CD4-positive, alpha-beta memory T cell (primary cell): ENCODE measurements at regions of chr4 and their contacts with region 1.

Region 1: DNA sequence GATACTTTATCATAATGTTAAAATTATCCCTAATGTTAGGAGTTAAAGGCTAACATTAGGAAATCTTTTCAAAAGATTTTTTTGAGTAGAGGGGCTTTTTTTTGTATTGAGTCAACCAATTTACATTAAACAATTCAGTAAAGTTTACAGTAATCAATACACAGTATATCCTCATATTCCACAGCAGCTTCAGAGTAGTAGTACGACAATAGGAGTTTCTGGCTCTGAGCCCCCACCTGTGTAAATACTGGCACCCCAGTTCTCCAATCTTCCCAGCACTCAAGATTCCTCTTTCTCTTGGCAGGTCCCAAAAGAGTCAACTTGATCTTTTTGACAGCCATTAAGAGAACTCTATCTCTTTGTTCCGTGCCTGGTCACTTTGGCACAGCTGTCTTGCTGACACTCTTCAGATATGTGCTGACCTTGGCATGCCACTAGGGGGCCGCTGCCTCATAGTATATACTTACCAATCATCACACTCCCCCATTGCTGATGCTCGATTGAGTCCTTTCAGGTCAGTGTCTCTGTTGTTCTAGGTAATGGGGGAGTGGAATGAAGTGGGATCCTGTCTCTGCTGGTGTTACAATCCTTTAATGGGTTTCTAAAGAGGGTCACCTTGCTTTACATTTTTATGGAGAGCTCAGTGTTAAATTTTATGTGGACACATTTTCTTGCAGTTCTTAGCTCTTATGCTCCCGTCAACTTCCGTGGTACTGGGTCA is 19.5 kb upstream of the CCNI start:
- DNase-seq: peak; percentile 58 to 70 (median 64)
- H3K4me3 ChIP-seq: no peak overlapping the region
- H3K4me3 Mint-ChIP-seq: no peak overlapping the region
- H3K27ac ChIP-seq: no peak overlapping the region
- H3K27ac Mint-ChIP-seq: peak overlapping the region in 1 of 7 donors; percentile 5
- H3K4me1 ChIP-seq: peaks cover 11% of the 10 kb centered on the region
- H3K4me1 Mint-ChIP-seq: peaks cover 9 to 19% (median 13%) of the 10 kb centered on the region in 4 donors
- H3K27me3 ChIP-seq: no peaks in the 10 kb centered on the region
- H3K27me3 Mint-ChIP-seq: no peaks in the 10 kb centered on the region

Region 2: DNA sequence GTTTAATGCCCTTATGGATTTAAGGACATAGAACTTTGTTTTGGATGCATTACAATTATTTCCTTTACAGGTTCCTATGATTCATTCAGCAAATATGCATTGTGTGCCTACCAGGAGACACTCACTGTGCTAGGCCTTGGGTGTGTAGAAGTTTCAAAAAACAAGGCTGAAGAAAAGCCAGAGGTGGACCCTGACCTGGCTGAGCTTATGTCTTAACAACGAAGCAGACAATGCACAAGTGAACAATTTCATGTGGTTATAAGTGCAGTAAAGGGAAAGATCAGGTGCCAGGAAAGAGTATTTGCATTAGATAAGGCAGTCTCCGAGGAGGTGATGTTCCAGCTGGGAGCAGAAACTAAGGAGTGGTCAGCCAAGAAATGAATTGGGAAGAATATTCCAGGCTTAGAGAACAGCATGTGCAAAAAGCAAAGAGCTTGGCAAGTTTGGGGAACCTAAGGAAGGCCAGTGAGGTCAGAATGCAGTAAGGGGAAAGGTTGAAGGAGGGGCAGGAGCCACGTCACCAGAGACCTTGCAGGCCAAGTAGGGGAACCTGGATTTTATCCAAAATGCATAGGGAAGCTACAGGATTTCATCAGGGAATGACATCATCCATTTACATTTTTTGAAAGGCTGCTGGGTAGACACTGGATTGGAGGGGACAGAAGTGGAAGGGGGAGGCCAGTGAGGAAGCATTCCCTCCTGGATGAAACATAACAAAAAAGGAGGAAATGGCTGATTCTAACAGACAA is 391.0 kb before region 1 on chr4:
- CTCF ChIA-PET with region 1: no interaction called
- POLR2A ChIA-PET with region 1: no interaction called
- intact Hi-C with region 1: no loop called
- DNase-seq: no peak
- H3K4me3 ChIP-seq: no peak overlapping the region
- H3K4me3 Mint-ChIP-seq: no peak overlapping the region
- H3K27ac ChIP-seq: no peak overlapping the region
- H3K27ac Mint-ChIP-seq: no peak overlapping the region
- H3K4me1 ChIP-seq: no peaks in the 10 kb centered on the region
- H3K4me1 Mint-ChIP-seq: no peaks in the 10 kb centered on the region
- H3K27me3 ChIP-seq: no peaks in the 10 kb centered on the region
- H3K27me3 Mint-ChIP-seq: peaks cover 2 to 11% of the 10 kb centered on the region in 2 donors

Region 3: DNA sequence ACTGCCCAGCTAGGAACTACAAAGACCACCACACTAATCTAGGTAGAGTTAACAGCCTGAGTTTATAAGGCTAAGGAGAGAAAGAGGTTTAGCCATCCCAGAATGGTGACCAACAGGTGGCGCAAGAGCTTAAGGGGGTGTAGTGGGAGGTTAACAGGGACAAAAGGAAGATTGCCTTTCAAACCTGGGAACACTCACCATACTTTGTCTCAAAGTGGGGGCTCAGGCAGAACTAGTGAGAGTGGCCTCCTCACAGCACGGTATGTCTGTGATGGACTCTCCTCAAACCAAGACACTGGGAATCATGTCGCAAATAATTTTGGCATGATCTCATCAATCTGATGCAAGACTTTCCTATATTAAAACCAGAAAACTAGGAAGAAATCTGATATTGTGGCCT is 42.9 kb before region 1 on chr4:
- CTCF ChIA-PET with region 1: interaction called, 12 read pairs
- POLR2A ChIA-PET with region 1: interaction called, 3 read pairs
- intact Hi-C with region 1: loop called (anchors 1 kb)
- DNase-seq: peak in 4 of 5 donors; percentile 38 to 59 (median 42)
- H3K4me3 ChIP-seq: no peak overlapping the region
- H3K4me3 Mint-ChIP-seq: no peak overlapping the region
- H3K27ac ChIP-seq: no peak overlapping the region
- H3K27ac Mint-ChIP-seq: peak overlapping the region in 6 of 7 donors; percentile 61 to 70 (median 68)
- H3K4me1 ChIP-seq: no peaks in the 10 kb centered on the region
- H3K4me1 Mint-ChIP-seq: peaks cover 0 to 15% (median 5%) of the 10 kb centered on the region in 4 donors
- H3K27me3 ChIP-seq: no peaks in the 10 kb centered on the region
- H3K27me3 Mint-ChIP-seq: no peaks in the 10 kb centered on the region

Region 4: GRCh38 chr4:77082886-77083608 is 12.2 kb before region 1 on chr4:
- CTCF ChIA-PET with region 1: interaction called, 23 read pairs
- POLR2A ChIA-PET with region 1: interaction called, 7 read pairs
- intact Hi-C with region 1: no loop called
- DNase-seq: no peak
- H3K4me3 ChIP-seq: no peak overlapping the region
- H3K4me3 Mint-ChIP-seq: no peak overlapping the region
- H3K27ac ChIP-seq: no peak overlapping the region
- H3K27ac Mint-ChIP-seq: no peak overlapping the region
- H3K4me1 ChIP-seq: peaks cover 7% of the 10 kb centered on the region
- H3K4me1 Mint-ChIP-seq: peaks cover 7 to 18% (median 11%) of the 10 kb centered on the region in 4 donors
- H3K27me3 ChIP-seq: no peaks in the 10 kb centered on the region
- H3K27me3 Mint-ChIP-seq: no peaks in the 10 kb centered on the region

Region 5: DNA sequence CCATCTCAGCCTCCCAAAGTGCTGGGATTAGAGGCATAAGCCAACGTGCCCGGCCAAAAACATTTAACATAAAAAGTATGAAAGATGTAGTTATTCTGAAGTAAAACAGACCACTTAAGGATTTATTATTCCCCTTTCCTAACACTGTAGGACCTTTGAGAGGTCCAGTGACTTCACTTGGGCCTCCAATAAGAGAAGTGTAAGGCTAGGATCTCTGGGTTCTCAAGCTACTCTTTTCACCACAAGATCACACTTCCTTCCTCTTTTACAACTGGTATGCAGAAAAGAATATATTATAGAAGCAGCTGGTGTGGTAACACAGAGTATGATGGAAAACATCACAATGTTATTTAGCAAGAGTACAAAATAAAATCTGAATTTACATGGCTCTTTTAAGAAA is 31.5 kb after region 1 on chr4:
- CTCF ChIA-PET with region 1: interaction called, 27 read pairs
- POLR2A ChIA-PET with region 1: interaction called, 4 read pairs
- intact Hi-C with region 1: no loop called
- DNase-seq: no peak
- H3K4me3 ChIP-seq: no peak overlapping the region
- H3K4me3 Mint-ChIP-seq: no peak overlapping the region
- H3K27ac ChIP-seq: no peak overlapping the region
- H3K27ac Mint-ChIP-seq: peak overlapping the region in 1 of 7 donors; percentile 50
- H3K4me1 ChIP-seq: peaks cover 11% of the 10 kb centered on the region
- H3K4me1 Mint-ChIP-seq: peaks cover 2 to 17% (median 7%) of the 10 kb centered on the region in 4 donors
- H3K27me3 ChIP-seq: no peaks in the 10 kb centered on the region
- H3K27me3 Mint-ChIP-seq: peaks cover 3 to 5% of the 10 kb centered on the region in 2 donors

Region 6: DNA sequence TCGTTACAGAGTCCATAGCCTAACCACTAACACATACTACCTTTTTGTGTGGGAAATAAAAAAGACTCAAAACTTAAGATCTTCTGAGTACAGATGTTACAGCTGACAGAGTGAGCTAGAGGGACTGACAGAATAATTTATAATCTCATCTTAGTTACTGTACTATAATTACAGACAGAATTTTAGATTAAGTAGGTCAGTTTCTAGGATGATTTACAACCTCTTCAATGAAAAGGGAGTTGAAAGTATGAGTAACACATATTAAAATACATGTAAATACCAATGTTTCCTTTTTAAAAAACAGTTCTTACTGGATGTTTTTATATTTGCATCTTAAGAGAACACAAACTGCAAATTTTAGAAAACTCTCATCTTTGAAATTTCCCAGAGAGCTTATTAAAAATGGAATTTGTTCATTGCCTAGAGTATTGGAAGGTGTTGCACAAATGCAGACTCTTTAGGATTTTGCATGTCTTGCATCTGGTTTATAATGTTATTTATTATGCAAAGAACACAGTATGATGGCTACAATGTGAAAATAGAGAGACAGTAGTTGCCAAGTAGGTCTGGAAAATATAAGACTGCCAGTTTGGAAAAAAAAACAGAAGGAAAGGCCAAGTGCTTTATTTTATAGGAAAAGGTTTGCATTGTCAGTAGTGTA is 37.5 kb after region 1 on chr4:
- CTCF ChIA-PET with region 1: interaction called, 27 read pairs
- POLR2A ChIA-PET with region 1: no interaction called
- intact Hi-C with region 1: no loop called
- DNase-seq: no peak
- H3K4me3 ChIP-seq: no peak overlapping the region
- H3K4me3 Mint-ChIP-seq: no peak overlapping the region
- H3K27ac ChIP-seq: no peak overlapping the region
- H3K27ac Mint-ChIP-seq: peak overlapping the region in 1 of 7 donors; percentile 22
- H3K4me1 ChIP-seq: peaks cover 6% of the 10 kb centered on the region
- H3K4me1 Mint-ChIP-seq: peaks cover 0 to 6% (median 1%) of the 10 kb centered on the region in 4 donors
- H3K27me3 ChIP-seq: no peaks in the 10 kb centered on the region
- H3K27me3 Mint-ChIP-seq: peaks cover 3 to 12% of the 10 kb centered on the region in 2 donors

Region 7: GRCh38 chr4:77146186-77147078 is 51.2 kb after region 1 on chr4:
- CTCF ChIA-PET with region 1: interaction called, 11 read pairs
- POLR2A ChIA-PET with region 1: no interaction called
- intact Hi-C with region 1: no loop called
- DNase-seq: no peak
- H3K4me3 ChIP-seq: no peak overlapping the region
- H3K4me3 Mint-ChIP-seq: peak overlapping the region in 5 of 8 donors; percentile 15 to 61 (median 51)
- H3K27ac ChIP-seq: no peak overlapping the region
- H3K27ac Mint-ChIP-seq: peak overlapping the region; percentile 25 to 77 (median 59)
- H3K4me1 ChIP-seq: peaks cover 19% of the 10 kb centered on the region
- H3K4me1 Mint-ChIP-seq: peaks cover 15 to 38% (median 16%) of the 10 kb centered on the region in 4 donors
- H3K27me3 ChIP-seq: no peaks in the 10 kb centered on the region
- H3K27me3 Mint-ChIP-seq: no peaks in the 10 kb centered on the region

Region 8: DNA sequence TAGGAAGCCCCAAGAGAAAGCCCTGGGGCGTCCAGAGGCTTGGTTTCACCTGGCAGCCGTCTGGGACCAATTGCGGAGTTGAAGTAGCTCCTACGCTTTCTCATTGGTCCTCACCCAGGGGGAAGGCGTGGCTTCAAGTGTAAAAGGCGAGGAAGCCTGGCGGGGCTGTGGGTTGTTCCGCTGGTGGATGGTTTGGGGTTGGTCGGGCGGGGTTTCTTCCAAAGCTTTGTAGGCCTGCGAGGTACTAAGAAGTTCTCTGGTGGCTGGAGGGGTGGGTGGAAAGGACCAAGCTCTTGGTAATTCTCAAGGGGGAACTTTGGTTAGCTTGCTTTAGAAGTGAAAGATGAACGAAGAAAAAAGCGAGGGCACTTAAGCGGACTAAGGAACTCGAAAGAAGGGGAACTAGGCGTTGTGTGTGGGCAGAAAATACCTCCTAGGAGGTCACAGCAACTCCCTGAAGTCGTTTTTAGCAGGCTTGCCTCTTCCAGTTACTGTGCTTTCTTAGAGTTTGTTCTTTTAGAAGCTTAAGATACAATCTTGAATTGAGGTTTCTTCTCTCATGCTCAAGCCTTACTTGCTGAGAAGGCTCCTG is 98.3 kb after region 1 on chr4:
- CTCF ChIA-PET with region 1: interaction called, 440 read pairs
- POLR2A ChIA-PET with region 1: no interaction called
- intact Hi-C with region 1: no loop called
- DNase-seq: peak; percentile 69 to 80 (median 70)
- H3K4me3 ChIP-seq: peak overlapping the region in 1 of 2 donors; percentile 41
- H3K4me3 Mint-ChIP-seq: peak overlapping the region; percentile 87 to 96 (median 91)
- H3K27ac ChIP-seq: peak overlapping the region; percentile 8
- H3K27ac Mint-ChIP-seq: peak overlapping the region; percentile 75 to 95 (median 90)
- H3K4me1 ChIP-seq: peaks cover 14% of the 10 kb centered on the region
- H3K4me1 Mint-ChIP-seq: peaks cover 12 to 19% (median 15%) of the 10 kb centered on the region in 4 donors
- H3K27me3 ChIP-seq: no peaks in the 10 kb centered on the region
- H3K27me3 Mint-ChIP-seq: peaks cover 0 to 2% of the 10 kb centered on the region in 2 donors